Right ventricle myocardium inferior (tissue), 1 donor: ENCODE measurements at regions of chr9 and their contacts with region 1.

Region 1: DNA sequence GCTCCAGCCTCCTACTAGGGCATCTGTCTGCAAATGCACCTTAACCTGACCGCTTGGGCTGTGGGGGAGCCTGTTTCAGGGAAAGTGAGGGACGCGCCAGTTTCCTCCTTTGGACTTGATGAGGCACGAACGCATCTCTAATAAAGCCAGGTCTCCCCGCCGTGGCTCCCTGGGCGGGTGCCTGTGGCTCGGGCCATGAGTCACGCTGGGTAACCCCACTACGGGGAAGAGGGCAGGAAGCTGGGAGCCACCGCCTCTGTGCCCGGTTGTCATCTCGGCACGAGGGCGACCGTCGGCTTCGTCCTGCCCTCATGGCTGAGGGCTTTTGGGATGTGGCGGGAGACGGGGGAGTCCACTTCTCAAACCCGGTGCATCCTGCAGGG is 12.1 kb downstream of the NOTCH1 start:
- DNase-seq: peak; percentile 87
- ATAC-seq: no peak

Region 2: DNA sequence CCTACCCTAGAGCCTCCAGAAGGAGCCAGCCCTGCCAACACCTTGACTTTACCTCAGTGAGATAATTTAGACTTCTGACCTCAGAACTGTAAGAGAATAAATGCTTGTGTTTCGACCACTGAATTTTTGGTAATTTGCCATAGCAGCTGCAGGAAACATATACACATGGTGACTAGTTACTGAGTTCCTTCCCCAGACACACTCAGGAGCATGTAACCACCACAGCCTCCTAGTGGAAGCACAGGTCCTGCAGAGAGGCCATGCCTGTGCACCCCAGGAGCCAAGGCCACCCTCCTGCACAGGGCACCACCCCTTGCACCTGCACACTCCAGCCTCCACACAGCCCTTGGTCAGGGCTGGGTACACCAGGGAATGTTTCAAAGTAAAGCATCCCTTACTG is 618.8 kb before region 1 on chr9:
- intact Hi-C with region 1: no loop called
- DNase-seq: no peak
- ATAC-seq: no peak

Region 3: DNA sequence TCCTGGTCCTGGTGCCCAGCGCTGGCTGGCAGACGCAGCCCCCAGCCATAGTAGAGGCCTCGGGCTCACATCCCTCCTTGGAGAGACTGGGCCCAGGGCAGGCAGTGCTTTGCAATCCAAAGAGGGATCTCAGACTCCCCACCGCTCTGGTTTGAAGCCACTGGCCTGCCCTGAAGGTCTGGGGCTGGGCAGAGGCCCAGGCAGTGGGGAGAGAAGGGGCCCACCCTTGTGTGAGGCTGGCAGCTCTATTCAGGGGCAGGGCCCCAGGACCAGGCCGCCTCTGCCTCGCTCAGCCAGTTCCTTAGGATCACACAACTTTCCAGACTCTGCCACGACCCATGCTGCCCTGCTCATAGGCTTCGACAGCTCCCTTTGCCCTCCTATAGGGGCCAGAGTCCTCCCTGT is 40.2 kb before region 1 on chr9:
- intact Hi-C with region 1: loop called (anchors 5 kb)
- DNase-seq: no peak
- ATAC-seq: no peak